A673 (cell line): ENCODE measurements at regions of chr6 and their contacts with region 1.

Region 1: GRCh38 chr6:15962449-15962764 is 166.5 kb upstream of the MYLIP start:
- DNase-seq: peak; percentile 71
- H3K4me3 ChIP-seq: no peak overlapping the region
- H3K27ac ChIP-seq: no peak overlapping the region
- H3K4me1 ChIP-seq: peaks cover 11% of the 10 kb centered on the region
- H3K27me3 ChIP-seq: no peaks in the 10 kb centered on the region
- CTCF ChIP-seq: no peak

Region 2: DNA sequence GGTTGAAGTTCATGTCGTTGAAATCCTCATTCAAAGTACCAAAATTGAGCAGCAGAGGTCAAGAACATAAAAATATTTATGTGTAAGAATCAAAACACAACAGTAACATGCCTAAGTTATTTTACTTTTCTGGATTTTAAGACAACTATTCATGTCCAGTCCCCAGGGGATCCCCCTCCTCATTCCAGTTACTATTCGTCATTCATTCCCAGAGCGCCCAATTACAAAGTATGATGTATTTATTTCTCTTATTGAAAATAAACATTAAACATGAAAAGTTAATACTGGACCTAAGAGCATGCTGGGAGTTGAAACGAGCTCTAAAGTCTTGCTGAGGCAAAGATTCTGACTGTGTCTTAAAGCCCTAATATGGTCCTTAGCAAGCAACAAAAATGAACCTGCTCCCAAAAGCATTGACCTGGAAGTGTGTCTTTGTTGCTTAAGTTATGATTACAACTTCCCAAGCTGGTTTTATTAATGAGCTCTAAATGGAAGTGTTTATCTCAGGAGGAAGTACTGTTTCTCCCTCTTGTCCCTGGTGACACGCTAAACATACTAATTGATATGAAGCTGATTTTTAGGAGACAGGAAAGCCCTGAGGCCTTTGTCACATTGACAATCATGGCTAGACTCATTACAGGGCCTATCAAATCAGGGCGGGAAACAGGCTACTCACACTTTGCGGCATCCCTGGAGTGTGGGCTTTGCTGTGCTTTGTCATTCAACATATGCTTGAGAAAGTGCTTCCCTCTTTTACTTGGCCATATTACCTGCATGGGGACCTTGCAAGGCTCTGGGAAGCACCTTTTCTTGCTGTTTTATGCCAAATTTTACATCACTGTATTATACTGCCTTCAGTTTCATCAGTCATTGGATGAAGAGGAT is 107.3 kb before region 1 on chr6:
- CTCF ChIA-PET with region 1: no interaction called
- POLR2A ChIA-PET with region 1: no interaction called
- intact Hi-C with region 1: no loop called
- DNase-seq: no peak
- H3K4me3 ChIP-seq: no peak overlapping the region
- H3K27ac ChIP-seq: no peak overlapping the region
- H3K4me1 ChIP-seq: no peaks in the 10 kb centered on the region
- H3K27me3 ChIP-seq: no peaks in the 10 kb centered on the region
- CTCF ChIP-seq: no peak

Region 3: DNA sequence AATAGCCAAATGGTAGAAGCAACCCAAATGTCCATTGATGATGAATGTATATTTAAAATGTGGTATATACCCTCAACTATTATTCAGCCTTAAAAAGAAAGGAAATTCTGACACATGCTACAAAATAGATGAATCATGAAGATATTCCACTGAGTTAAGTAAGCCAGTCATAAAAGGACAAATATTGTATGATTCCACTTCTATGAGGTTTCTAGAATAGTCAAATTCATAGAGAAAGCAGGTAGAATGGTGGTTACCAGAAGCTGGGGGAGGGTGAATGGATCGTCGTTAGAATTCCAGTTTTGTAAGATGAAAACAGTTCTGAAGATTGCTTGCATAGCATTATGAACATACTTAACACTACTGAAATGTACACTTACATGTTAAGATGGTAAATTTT is 47.9 kb before region 1 on chr6:
- CTCF ChIA-PET with region 1: no interaction called
- POLR2A ChIA-PET with region 1: interaction called, 11 read pairs
- intact Hi-C with region 1: no loop called
- DNase-seq: no peak
- H3K4me3 ChIP-seq: no peak overlapping the region
- H3K27ac ChIP-seq: no peak overlapping the region
- H3K4me1 ChIP-seq: no peaks in the 10 kb centered on the region
- H3K27me3 ChIP-seq: no peaks in the 10 kb centered on the region
- CTCF ChIP-seq: no peak